ENCODE measurements at regions of chr10 and their contacts with region 1.

Region 1: DNA sequence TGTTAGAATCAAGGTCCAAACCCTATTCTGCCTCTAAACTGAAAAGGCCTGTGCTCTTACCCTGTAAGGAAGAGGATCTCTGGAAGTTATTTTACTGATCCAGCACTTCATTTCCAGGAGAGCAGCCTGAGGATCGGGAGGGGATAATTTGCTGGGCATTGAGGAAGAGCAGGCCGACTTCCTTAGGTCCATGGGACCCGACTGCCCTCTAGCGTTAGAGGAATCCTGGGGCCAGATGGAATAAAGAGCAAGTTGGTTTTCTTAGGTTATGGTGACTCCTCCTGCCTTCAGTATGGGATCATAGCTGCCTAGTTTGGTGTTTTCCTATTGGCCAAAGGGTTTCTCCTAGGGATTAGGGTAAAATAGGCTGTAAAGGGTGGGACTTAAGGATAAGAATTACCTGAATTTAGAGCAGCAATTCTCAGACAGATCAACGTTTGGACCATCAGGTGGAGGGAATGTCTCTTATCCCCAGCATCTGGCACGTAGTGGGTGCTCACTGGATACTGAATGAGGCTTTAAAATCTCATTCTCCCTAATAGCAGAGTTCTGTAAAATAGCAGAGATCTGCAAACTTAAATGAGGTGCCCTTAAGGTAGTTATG is 40.0 kb upstream of the SORBS1 start:
- DNase-seq: peak; percentile 65
- H3K4me3 ChIP-seq: no peak overlapping the region
- CTCF ChIP-seq: peak; percentile 90

Region 2: GRCh38 chr10:95445837-95446486 is 155.3 kb before region 1 on chr10:
- CTCF ChIA-PET with region 1: interaction called, 12 read pairs
- POLR2A ChIA-PET with region 1: interaction called, 3 read pairs
- DNase-seq: peak; percentile 19
- H3K4me3 ChIP-seq: no peak overlapping the region
- CTCF ChIP-seq: peak; percentile 74

Region 3: DNA sequence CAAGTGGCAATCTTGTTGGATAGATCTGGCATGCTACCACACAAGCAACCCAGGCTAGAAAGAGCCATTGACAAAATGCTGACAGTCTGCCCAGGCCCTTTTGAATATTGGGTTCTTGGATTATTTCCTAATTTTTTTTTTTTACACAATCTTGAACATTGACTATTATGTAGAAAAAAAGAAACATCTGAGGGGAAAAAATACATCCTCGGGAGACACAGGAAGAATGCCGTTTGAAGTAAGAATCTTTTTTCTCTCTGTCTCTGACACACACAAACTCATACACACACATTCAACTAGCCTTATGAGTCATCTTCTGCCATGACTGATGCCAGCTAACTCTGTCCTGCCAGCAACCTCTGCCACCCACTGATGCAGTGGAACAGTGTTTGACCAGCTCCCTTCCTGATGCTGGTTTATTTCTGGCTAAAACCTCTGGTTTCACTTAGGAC is 87.3 kb before region 1 on chr10:
- CTCF ChIA-PET with region 1: no interaction called
- POLR2A ChIA-PET with region 1: no interaction called
- DNase-seq: no peak
- H3K4me3 ChIP-seq: no peak overlapping the region
- CTCF ChIP-seq: no peak

Region 4: GRCh38 chr10:95588025-95588424 is 13.2 kb before region 1 on chr10:
- CTCF ChIA-PET with region 1: interaction called, 10 read pairs
- POLR2A ChIA-PET with region 1: no interaction called
- DNase-seq: no peak
- H3K4me3 ChIP-seq: no peak overlapping the region
- CTCF ChIP-seq: no peak